ENCODE measurements at regions of chr7 and their contacts with region 1.

Region 1: DNA sequence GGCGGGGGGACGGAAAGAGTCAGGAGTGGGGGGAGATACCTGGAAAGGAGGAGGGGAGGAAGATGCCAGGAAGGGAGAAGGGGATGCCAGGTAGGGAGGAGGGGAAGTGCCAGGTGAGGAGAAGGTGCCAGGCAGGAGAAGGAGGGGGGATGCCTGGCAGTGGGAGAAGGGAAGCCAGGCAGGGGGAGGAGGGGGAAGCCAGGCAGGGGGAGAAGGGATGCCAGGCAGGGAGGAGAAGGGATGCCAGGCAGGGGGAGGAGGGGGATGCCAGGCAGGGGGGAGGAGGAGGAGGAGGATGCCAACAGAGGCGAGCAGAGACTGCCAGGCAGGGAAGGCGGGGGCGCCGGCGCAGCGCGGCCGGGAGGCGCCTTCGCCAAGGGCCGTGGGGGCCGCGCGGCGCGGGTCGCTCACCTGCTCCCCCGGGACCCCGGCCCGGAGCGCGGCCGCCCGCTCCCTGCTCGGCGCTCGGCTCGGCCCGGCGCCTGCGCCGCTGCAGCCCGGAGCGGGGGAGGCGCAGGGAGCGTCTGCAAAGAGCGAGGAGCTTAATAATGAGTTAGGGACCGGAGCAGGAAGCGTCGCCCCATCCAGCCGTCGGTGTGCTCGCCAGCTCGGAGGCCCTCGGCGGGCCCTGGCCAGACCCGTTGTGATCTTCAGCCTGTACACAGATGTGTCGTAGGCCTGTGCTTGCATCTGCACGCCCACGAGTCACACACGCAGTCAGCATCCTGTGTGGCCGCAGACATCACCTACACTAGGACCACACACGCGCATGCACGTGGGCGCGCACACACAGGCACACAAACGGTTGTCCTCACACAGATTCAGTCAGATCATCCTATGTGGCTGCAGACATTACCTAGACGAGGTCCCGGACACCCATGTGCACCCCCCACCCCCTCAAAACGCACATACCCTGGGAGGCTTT is 28.4 kb upstream of the SMARCD3 start:
- DNase-seq: peak; percentile 78
- H3K4me3 ChIP-seq: peak overlapping the region; percentile 27 to 50 (median 50)
- H3K27ac ChIP-seq: peak overlapping the region in 3 of 4 donors; percentile 16 to 51 (median 19)
- H3K4me1 ChIP-seq: peaks cover 0 to 27% (median 19%) of the 10 kb centered on the region in 4 donors
- H3K27me3 ChIP-seq: peaks cover 0 to 2% (median 0%) of the 10 kb centered on the region in 3 donors
- CTCF ChIP-seq: no peak
- EP300 ChIP-seq: no peak
- POLR2A ChIP-seq: no peak

Region 2: DNA sequence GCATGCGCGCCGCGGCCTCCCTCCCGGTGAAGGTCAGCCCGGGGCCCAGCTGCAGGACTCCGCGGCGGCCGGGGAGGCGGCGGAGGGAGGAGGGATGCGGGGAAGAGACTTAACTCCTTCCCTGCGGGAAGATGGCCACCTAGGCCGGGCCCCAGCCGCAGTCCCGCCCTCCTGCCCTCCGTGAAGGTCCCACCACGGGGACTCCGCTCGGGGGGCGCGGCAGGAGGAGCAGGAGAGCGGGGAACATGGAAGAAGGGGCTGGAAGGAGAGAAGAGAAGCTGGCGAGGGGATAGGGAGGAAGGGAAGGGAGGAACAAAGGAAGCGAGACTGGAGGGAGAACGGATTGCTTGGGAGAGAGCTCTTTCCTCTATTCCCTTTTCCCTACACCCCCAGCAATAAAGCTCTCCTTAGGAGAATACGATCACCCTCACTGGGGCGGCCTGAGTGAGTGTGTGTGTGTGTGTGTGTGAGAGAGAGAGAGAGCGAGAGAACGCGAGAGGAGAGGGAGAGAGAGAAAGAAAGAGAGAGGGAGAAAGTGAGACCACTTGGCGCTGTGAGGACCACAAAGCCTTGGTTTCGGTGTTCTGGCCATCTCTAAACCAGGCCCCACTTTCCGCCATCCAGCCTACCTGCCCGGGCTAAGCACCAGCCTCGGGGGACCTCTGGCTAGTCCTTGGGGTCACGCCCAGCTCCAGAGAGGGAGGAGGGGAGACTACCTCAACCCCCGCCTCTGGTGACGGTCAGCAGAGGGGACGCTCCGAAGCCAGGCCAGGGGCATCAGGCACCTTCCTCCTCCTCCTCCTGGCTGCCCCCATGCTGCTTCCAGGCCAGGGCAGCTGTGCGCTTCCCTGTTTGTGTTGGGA is 24.7 kb before region 1 on chr7:
- intact Hi-C with region 1: loop called (anchors 2 kb)
- DNase-seq: peak; percentile 89
- H3K4me3 ChIP-seq: peak overlapping the region; percentile 60 to 77 (median 66)
- H3K27ac ChIP-seq: peak overlapping the region; percentile 93 to 95 (median 94)
- H3K4me1 ChIP-seq: peaks cover 0 to 57% (median 53%) of the 10 kb centered on the region in 4 donors
- H3K27me3 ChIP-seq: no peaks in the 10 kb centered on the region
- CTCF ChIP-seq: no peak
- EP300 ChIP-seq: no peak
- POLR2A ChIP-seq: peak; percentile 26 to 45

Measured in sigmoid colon (tissue), 7 donors.